WTC11 (cell line): ENCODE measurements at regions of chr5 and their contacts with region 1.

Region 1: GRCh38 chr5:5139777-5140478 is at the start of gene ADAMTS16:
- DNase-seq: peak; percentile 75
- ATAC-seq: peak; percentile 71
- H3K4me3 Mint-ChIP-seq: peak within 1 kb of the TSS; percentile 85
- H3K27ac Mint-ChIP-seq: peak within 1 kb of the TSS; percentile 48
- H3K4me1 Mint-ChIP-seq: peaks cover 53% of the 10 kb centered on the region
- H3K27me3 Mint-ChIP-seq: peaks cover 6% of the 10 kb centered on the region
- CTCF ChIP-seq: no peak
- total RNA-seq, gene ADAMTS16: 30.1 to 34.6 TPM (median 30.7 TPM) in 3 replicates

Region 2: DNA sequence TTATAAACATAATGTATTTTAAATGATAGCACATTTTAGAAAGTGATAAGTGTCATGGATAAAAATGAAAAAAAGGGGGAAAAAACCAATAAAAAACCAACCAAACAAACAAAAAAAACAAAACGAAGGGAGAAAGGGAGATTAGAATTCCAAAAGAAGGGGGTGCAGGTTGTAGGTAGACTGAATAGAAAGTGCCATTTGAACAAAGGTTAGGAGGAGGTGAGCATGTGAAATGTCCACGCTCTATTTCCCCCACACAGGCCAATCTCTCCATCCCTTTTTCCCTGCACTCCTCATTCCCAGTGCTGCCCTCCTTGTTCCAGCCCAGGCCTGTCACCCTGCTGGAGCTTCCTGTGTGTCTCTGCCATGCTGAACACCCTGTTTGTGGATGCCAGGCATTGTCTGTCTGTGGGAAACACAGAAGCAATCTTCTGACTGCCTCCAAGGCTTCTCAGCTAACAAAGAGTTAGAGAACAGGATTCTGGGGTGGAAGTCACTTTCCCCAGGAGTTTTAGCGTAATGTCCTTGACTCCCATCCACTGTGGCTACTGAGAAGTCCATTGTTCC is 139.0 kb after region 1 on chr5:
- CTCF ChIA-PET with region 1: no interaction called
- POLR2A ChIA-PET with region 1: no interaction called
- DNase-seq: no peak
- ATAC-seq: peak; percentile 67
- H3K4me3 Mint-ChIP-seq: no peak overlapping the region
- H3K27ac Mint-ChIP-seq: no peak overlapping the region; the same call in 1 of the 2 replicates
- H3K4me1 Mint-ChIP-seq: peaks cover 23% of the 10 kb centered on the region
- H3K27me3 Mint-ChIP-seq: no peaks in the 10 kb centered on the region
- CTCF ChIP-seq: no peak

Region 3: DNA sequence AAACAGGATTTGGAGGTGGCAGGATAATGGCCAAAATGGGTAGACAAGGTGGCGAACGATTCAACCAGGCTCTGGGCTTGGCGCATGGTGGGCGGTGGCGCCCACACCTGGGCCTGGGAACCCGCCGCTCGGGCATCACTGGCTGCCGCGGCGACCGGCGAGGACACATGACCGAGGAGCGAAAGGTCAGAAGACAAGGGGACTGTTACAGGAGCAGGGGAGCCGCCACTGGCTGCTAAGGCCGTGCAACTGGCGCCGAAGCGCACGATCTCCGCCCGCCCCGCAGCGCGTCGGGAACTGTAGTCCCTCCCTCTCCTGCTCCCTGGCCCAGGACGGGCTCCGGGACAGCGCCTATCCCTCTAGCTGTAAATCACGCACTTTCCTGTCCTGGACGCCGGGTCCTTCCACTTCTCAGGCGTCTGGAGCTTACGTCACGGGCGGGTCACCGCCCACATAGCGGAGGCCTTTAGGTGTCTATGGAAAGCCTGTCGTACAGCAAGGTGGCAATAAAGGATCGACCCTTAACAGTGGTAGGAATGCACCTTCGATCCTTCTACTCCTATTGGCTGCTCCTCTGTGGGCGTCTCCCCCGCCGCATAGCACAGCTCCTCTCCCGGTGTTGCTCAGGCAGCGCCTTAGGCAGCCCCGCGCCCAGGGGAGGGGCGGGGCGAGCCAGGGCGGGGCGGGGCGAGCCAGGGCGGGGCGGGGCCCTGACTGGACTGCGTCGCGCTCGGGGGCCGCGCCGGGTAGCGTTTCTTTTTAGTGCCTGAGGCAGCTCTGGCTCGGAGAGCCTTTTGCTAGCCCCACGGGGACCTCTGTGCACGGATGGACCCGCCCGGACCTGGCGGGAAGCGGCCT is 282.3 kb after region 1 on chr5 and contains the start of gene ICE1:
- CTCF ChIA-PET with region 1: interaction called, 10 read pairs
- POLR2A ChIA-PET with region 1: interaction called, 3 read pairs
- DNase-seq: peak; percentile 97
- ATAC-seq: peak; percentile 95
- H3K4me3 Mint-ChIP-seq: peak within 1 kb of the TSS; percentile 89
- H3K27ac Mint-ChIP-seq: peak within 1 kb of the TSS; percentile 96
- H3K4me1 Mint-ChIP-seq: peaks cover 38% of the 10 kb centered on the region
- H3K27me3 Mint-ChIP-seq: no peaks in the 10 kb centered on the region; the same call in 1 of the 2 replicates
- CTCF ChIP-seq: no peak
- total RNA-seq, gene ICE1: 40.7 to 48.9 TPM (median 45.3 TPM) in 3 replicates